GM10248 (cell line): ENCODE measurements at regions of chr1 and their contacts with region 1.

Region 1: DNA sequence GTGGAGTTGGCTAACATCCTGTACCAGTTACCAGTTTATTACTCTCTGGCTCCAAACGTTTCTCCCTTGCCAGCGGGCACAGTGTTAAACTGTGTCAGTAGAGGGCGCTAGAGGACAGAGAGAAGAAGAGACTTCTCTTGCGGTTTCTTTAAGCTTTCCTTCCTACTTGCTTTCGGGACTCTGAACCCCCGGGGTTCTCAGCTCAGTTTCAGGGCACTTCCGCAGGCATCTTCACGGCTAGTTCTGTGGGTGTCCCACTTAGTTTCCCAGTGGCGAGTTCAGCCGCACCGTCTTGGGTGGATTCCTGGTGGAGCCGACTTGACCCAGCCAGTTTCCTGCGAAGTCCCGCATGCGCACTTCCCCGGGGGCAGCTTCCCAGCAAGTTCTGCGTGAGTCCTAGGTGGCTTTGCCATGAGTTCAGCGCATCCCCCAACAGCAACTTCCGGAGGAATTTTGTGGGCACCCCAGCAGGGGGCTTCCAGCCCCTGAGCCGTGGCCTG is 37.9 kb upstream of the BTG2 start:
- DNase-seq: peak; percentile 80
- CTCF ChIP-seq: peak; percentile 94

Region 2: GRCh38 chr1:203026031-203026989 is 241.1 kb before region 1 on chr1 and contains the start of gene PPFIA4:
- CTCF ChIA-PET with region 1: interaction called, 32 read pairs
- POLR2A ChIA-PET with region 1: no interaction called
- DNase-seq: peak; percentile 98
- CTCF ChIP-seq: no peak

Region 3: GRCh38 chr1:203216274-203217138 is 50.9 kb before region 1 on chr1:
- CTCF ChIA-PET with region 1: interaction called, 17 read pairs
- POLR2A ChIA-PET with region 1: no interaction called
- DNase-seq: peak; percentile 77
- CTCF ChIP-seq: peak; percentile 83

Region 4: GRCh38 chr1:203320591-203321272 is 53.3 kb after region 1 on chr1:
- CTCF ChIA-PET with region 1: interaction called, 179 read pairs
- POLR2A ChIA-PET with region 1: no interaction called
- DNase-seq: peak; percentile 67
- CTCF ChIP-seq: no peak

Region 5: GRCh38 chr1:203440771-203441170 is 173.4 kb after region 1 on chr1:
- CTCF ChIA-PET with region 1: interaction called, 21 read pairs
- POLR2A ChIA-PET with region 1: no interaction called
- DNase-seq: peak; percentile 45
- CTCF ChIP-seq: peak; percentile 43

Region 6: DNA sequence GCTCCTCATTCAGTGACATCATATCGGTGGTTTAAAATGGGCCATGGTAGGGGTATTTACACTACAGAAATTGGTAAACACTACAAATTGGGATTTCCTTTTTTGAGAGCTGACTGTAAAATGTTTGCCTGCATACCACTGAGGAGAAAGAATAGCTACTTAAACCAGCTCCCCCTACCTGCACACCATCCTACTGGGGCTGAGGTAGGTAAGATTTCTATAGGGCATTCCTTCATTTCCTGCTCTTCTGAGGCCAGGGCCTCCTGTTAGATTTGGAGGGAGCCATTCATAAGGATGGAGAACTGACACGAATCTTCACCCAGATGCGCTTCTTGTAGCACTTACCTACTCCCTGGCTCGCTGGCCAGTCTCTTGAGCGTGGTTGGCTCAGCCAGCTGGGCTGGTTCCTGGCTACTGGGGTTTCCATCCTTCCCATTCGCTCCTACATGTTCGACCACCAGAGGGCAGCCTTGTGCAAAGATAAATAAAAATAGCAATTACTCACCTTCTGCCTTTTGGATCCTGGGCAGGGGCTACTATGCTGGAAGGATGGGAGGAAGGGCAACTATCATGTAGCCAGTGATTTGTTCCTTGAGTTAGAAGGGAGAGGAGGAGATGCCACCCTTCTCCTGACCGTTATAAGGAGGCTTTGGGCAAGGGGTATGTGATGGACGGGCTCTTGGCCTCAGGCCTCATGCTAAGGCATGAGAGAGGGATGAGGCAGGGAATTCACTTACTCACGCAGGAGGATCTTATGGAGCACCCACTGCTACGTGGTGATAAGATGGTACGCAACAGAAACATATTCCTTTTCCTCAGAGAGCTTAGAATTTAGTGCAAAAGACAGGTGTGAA is 237.2 kb after region 1 on chr1:
- CTCF ChIA-PET with region 1: interaction called, 24 read pairs
- POLR2A ChIA-PET with region 1: no interaction called
- DNase-seq: peak; percentile 82
- CTCF ChIP-seq: peak; percentile 84

Region 7: GRCh38 chr1:203555076-203555475 is 287.7 kb after region 1 on chr1:
- CTCF ChIA-PET with region 1: no interaction called
- POLR2A ChIA-PET with region 1: no interaction called
- DNase-seq: no peak
- CTCF ChIP-seq: no peak